ACHN (cell line): ENCODE measurements at regions of chr12 and their contacts with region 1.

Region 1: GRCh38 chr12:114999812-115000437 is 315.9 kb upstream of the TBX3 start:
- DNase-seq: no peak

Region 2: GRCh38 chr12:114848666-114849065 is 151.3 kb before region 1 on chr12:
- in situ Hi-C with region 1: loop called (anchors 25 kb)
- DNase-seq: no peak